ENCODE measurements at regions of chr20 and their contacts with region 1.

Region 1: DNA sequence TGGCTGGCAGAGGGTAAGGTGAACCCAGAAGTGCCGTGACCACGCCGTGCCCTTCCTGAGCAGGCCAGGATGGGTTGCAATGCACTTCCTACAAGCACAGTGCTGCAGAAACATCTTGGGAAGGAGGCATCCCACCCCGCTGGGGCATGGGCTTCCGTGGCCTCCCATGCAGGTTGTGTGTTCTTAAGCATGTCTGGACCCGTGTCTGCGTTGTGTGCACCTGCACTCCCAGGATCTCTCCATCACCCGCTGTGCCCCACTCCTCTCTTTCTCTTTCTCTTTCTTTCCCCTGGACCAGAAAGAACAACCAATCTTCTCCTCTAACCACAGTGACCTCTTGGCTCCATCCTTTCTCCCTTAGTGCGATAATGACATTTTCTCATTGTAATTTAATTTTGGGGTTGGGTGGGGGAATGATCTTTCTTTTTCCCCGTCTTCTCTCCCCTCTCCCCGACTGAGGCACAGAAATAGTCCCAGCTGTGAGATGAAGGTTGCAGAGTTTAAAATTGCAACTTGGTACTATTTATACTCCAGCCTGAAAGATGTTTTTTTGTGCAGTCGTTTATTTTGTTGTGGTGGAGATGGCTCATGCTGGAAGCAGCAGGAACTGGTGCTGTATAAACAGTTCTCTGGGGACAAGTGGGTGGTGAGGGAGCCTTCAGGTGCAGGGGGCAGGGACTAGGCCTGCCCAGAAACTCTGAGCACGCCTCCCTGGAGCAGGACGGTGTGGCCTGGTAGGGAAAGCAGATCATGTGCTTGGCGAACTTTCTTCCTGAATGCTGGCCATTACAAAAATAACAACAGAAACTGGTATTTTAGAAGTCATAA is 20.5 kb downstream of the BCAS4 start:
- DNase-seq: peak; percentile 92
- ATAC-seq: peak; percentile 95
- H3K4me3 ChIP-seq: peak overlapping the region; percentile 9; the same call in 1 of the 2 replicates
- H3K27ac ChIP-seq: no peak overlapping the region
- H3K4me1 ChIP-seq: peaks cover 15% of the 10 kb centered on the region
- H3K27me3 ChIP-seq: no peaks in the 10 kb centered on the region
- CTCF ChIP-seq: no peak
- POLR2A ChIP-seq: no peak
- RAD21 ChIP-seq: no peak

Region 2: GRCh38 chr20:50799890-50800655 is 15.3 kb before region 1 on chr20:
- CTCF ChIA-PET with region 1: interaction called, 3 read pairs
- POLR2A ChIA-PET with region 1: no interaction called
- dilution Hi-C with region 1: no loop called
- in situ Hi-C with region 1: no loop called
- intact Hi-C with region 1: loop called (anchors 1 kb)
- DNase-seq: no peak
- ATAC-seq: no peak
- H3K4me3 ChIP-seq: no peak overlapping the region
- H3K27ac ChIP-seq: no peak overlapping the region
- H3K4me1 ChIP-seq: no peaks in the 10 kb centered on the region
- H3K27me3 ChIP-seq: no peaks in the 10 kb centered on the region
- CTCF ChIP-seq: no peak
- POLR2A ChIP-seq: no peak
- RAD21 ChIP-seq: no peak

Region 3: GRCh38 chr20:50913690-50914375 is 98.5 kb after region 1 on chr20:
- CTCF ChIA-PET with region 1: no interaction called
- POLR2A ChIA-PET with region 1: no interaction called
- dilution Hi-C with region 1: loop called (anchors 25 kb)
- in situ Hi-C with region 1: no loop called
- intact Hi-C with region 1: loop called (anchors 5 kb)
- DNase-seq: peak; percentile 88
- ATAC-seq: peak; percentile 88
- H3K4me3 ChIP-seq: no peak overlapping the region
- H3K27ac ChIP-seq: no peak overlapping the region
- H3K4me1 ChIP-seq: peaks cover 31% of the 10 kb centered on the region
- H3K27me3 ChIP-seq: no peaks in the 10 kb centered on the region
- CTCF ChIP-seq: no peak
- POLR2A ChIP-seq: no peak
- RAD21 ChIP-seq: no peak

Region 4: GRCh38 chr20:50929299-50930138 is 114.1 kb after region 1 on chr20:
- CTCF ChIA-PET with region 1: interaction called, 3 read pairs
- POLR2A ChIA-PET with region 1: interaction called, 3 read pairs
- dilution Hi-C with region 1: loop called (anchors 25 kb)
- in situ Hi-C with region 1: loop called (anchors 5 kb)
- intact Hi-C with region 1: loop called (anchors 1 kb)
- DNase-seq: peak; percentile 97
- ATAC-seq: peak; percentile 56
- H3K4me3 ChIP-seq: peak overlapping the region; percentile 95
- H3K27ac ChIP-seq: peak overlapping the region; percentile 94
- H3K4me1 ChIP-seq: peaks cover 18% of the 10 kb centered on the region
- H3K27me3 ChIP-seq: no peaks in the 10 kb centered on the region
- CTCF ChIP-seq: peak; percentile 99
- POLR2A ChIP-seq: peak; percentile 25; the same call in 1 of the 2 replicates
- RAD21 ChIP-seq: peak; percentile 81

Region 5: DNA sequence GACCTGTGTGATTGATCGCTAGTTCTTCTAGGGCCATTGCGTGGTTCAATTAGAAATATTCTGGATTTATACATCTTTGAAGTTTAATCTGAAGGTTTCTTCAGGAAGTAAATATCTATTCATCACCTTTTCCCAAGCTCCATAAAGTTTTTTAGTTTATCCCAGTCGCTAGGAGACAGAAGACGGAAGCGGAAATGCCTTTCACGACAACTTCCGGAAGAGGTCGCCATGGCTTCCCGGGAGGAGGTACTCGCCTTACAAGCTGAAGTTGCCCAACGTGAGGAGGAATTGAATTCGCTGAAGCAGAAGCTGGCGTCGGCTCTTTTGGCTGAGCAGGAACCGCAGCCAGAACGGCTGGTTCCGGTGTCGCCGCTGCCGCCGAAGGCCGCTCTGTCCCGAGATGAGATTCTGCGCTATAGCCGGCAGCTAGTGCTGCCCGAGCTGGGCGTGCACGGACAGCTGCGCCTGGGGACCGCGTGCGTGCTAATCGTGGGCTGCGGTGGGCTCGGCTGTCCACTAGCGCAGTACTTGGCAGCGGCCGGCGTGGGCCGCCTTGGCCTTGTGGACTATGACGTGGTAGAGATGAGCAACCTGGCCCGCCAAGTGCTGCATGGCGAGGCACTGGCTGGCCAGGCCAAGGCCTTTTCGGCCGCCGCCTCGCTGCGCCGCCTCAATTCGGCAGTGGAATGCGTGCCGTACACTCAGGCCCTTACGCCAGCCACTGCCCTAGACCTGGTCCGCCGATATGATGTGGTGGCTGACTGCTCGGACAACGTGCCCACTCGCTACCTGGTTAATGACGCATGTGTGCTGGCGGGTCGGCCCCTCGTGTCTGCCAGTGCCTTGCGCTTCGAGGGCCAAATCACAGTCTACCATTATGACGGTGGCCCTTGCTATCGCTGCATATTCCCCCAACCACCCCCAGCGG is 143.5 kb after region 1 on chr20 and contains the start of gene MOCS3:
- CTCF ChIA-PET with region 1: no interaction called
- POLR2A ChIA-PET with region 1: no interaction called
- dilution Hi-C with region 1: no loop called
- in situ Hi-C with region 1: no loop called
- intact Hi-C with region 1: loop called (anchors 2 kb)
- DNase-seq: peak; percentile 93
- ATAC-seq: peak; percentile 83
- H3K4me3 ChIP-seq: peak within 1 kb of the TSS; percentile 91
- H3K27ac ChIP-seq: peak within 1 kb of the TSS; percentile 93
- H3K4me1 ChIP-seq: peaks cover 10% of the 10 kb centered on the region
- H3K27me3 ChIP-seq: no peaks in the 10 kb centered on the region
- CTCF ChIP-seq: 0 out of 2 replicates have a peak, but pooled peaks have one; percentile 0
- POLR2A ChIP-seq: peak; percentile 78; the same call in 1 of the 2 replicates
- RAD21 ChIP-seq: no peak; the same call in 1 of the 2 replicates
- total RNA-seq, gene MOCS3: 9.9 and 11.4 TPM in 2 replicates

Region 6: GRCh38 chr20:51154266-51154970 is 339.0 kb after region 1 on chr20:
- CTCF ChIA-PET with region 1: no interaction called
- POLR2A ChIA-PET with region 1: no interaction called
- dilution Hi-C with region 1: no loop called
- in situ Hi-C with region 1: no loop called
- intact Hi-C with region 1: no loop called
- DNase-seq: no peak
- ATAC-seq: no peak
- H3K4me3 ChIP-seq: no peak overlapping the region
- H3K27ac ChIP-seq: no peak overlapping the region
- H3K4me1 ChIP-seq: peaks cover 5% of the 10 kb centered on the region
- H3K27me3 ChIP-seq: peaks cover 59% of the 10 kb centered on the region
- CTCF ChIP-seq: no peak
- POLR2A ChIP-seq: no peak
- RAD21 ChIP-seq: no peak

Measured in IMR-90 (cell line).